ENCODE measurements at regions of chr7 and their contacts with region 1.

Region 1: DNA sequence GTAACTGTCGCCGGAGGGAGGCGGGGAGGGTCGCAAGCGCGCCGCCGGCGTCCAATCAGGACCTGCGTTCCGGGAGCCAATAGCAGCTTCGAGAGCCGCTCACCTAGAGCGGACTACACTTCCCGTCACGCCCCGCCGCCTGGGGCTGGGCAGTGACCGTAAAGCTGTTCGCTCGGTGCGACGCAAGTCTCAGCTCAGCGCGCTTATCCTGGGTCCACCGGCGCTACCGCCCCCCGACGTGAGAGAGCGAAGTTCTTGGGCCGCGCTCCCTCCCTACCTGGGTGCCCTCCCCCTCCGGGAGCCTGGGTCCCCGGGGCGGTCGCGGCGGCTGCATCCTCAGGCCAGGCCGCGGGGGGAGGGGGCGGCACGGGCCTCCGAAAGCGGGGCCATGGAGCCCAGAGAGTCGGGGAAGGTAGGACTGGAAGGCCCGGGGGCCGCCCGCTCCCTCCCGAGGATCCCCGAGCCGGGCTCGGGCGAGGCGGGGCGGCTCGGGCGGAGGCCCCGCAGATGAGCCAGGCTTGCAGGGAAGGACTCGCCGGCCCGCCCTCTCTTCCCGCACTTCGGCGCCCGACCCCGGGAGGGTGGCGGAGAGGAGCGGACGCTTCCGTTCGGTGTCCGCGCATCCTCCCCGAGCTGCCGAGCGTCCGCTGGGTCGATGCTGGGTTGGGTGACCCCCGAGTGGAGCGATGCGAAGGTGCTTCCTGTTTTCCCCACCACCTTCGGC is at the start of gene ZNF862:
- DNase-seq: peak; percentile 98 to 99
- ATAC-seq: peak; percentile 99
- H3K4me3 ChIP-seq: peak within 1 kb of the TSS; percentile 83
- H3K27ac ChIP-seq: peak within 1 kb of the TSS; percentile 82
- H3K4me1 ChIP-seq: peaks cover 20% of the 10 kb centered on the region
- H3K27me3 ChIP-seq: peaks cover 0 to 2% (median 0%) of the 10 kb centered on the region in 3 donors
- CTCF ChIP-seq: no peak
- total RNA-seq, gene ZNF862: 5.3 to 7.8 (median 6.7) TPM

Region 2: GRCh38 chr7:149771721-149772240 is 66.6 kb before region 1 on chr7:
- intact Hi-C with region 1: loop called in 1 of 2 experiments (anchors 5 kb)
- DNase-seq: peak; percentile 90 to 94
- ATAC-seq: peak; percentile 93 to 98 (median 97)
- H3K4me3 ChIP-seq: peak overlapping the region; percentile 70
- H3K27ac ChIP-seq: no peak overlapping the region
- H3K4me1 ChIP-seq: peaks cover 5% of the 10 kb centered on the region
- H3K27me3 ChIP-seq: peaks cover 0 to 8% (median 1%) of the 10 kb centered on the region in 3 donors
- CTCF ChIP-seq: no peak